A549 (cell line): ENCODE measurements at regions of chr5 and their contacts with region 1.

Region 1: GRCh38 chr5:59380350-59380951 is 513.1 kb downstream of the PDE4D start:
- DNase-seq: peak in 1 of 2 experiments; percentile 92
- ATAC-seq: peak; percentile 84 to 86
- H3K4me3 ChIP-seq: no peak overlapping the region
- H3K27ac ChIP-seq: peak overlapping the region; percentile 45 to 73
- H3K4me1 ChIP-seq: peaks cover 58% of the 10 kb centered on the region
- CTCF ChIP-seq: peak; percentile 66
- EP300 ChIP-seq: no peak
- POLR2A ChIP-seq: no peak
- RAD21 ChIP-seq: peak; percentile 78 to 83

Region 2: GRCh38 chr5:59222687-59223521 is 157.5 kb before region 1 on chr5:
- CTCF ChIA-PET with region 1: interaction called, 10 read pairs
- POLR2A ChIA-PET with region 1: interaction called, 7 read pairs
- DNase-seq: no peak
- ATAC-seq: peak; percentile 42 to 62; a peak in 5 of 6 replicates
- H3K4me3 ChIP-seq: no peak overlapping the region
- H3K27ac ChIP-seq: peak overlapping the region; percentile 20 to 69
- H3K4me1 ChIP-seq: peaks cover 65% of the 10 kb centered on the region
- CTCF ChIP-seq: no peak
- EP300 ChIP-seq: no peak
- POLR2A ChIP-seq: no peak
- RAD21 ChIP-seq: no peak

Region 3: GRCh38 chr5:59351076-59351794 is 29.2 kb before region 1 on chr5:
- CTCF ChIA-PET with region 1: interaction called, 16 read pairs
- POLR2A ChIA-PET with region 1: no interaction called
- DNase-seq: no peak
- ATAC-seq: peak in 1 of 2 experiments; percentile 35; a peak in 2 of 6 replicates
- H3K4me3 ChIP-seq: no peak overlapping the region
- H3K27ac ChIP-seq: peak overlapping the region; percentile 78 to 86; a peak in 4 of 6 replicates
- H3K4me1 ChIP-seq: peaks cover 100% of the 10 kb centered on the region
- CTCF ChIP-seq: no peak; the same call in 2 of the 3 replicates
- EP300 ChIP-seq: no peak
- POLR2A ChIP-seq: no peak
- RAD21 ChIP-seq: no peak